ENCODE measurements at regions of chr1 and their contacts with region 1.

Region 1: GRCh38 chr1:201511941-201512539 is 5.1 kb upstream of the CSRP1 start:
- DNase-seq: no peak
- H3K4me3 Mint-ChIP-seq: no peak overlapping the region
- H3K27ac Mint-ChIP-seq: no peak overlapping the region
- H3K4me1 Mint-ChIP-seq: peaks cover 42% of the 10 kb centered on the region
- H3K27me3 Mint-ChIP-seq: no peaks in the 10 kb centered on the region

Region 2: GRCh38 chr1:201436393-201436792 is 75.6 kb before region 1 on chr1:
- CTCF ChIA-PET with region 1: interaction called, 35 read pairs
- POLR2A ChIA-PET with region 1: no interaction called
- DNase-seq: no peak
- H3K4me3 Mint-ChIP-seq: no peak overlapping the region
- H3K27ac Mint-ChIP-seq: no peak overlapping the region
- H3K4me1 Mint-ChIP-seq: peaks cover 4% of the 10 kb centered on the region
- H3K27me3 Mint-ChIP-seq: peaks cover 34% of the 10 kb centered on the region

Region 3: DNA sequence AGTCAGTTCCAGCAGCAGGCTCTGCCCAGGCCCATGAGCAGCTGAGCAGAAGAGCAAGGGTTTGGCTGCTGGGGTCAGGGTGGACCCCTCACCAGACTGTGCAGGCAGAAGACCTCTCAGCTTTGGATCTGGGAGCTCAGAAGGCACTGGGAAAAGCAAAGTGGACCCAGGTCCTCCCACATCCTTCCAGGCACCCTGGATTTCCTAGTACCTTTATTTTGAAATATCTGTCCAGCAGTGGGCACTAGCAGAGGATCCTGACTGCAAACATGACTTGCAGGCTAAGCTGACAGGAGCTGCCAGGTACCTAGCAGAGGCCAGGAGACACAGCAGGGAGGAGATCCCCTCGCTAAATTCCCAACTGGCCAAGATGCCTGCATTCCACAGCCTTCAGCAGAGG is 56.4 kb before region 1 on chr1:
- CTCF ChIA-PET with region 1: interaction called, 140 read pairs
- POLR2A ChIA-PET with region 1: interaction called, 3 read pairs
- DNase-seq: no peak
- H3K4me3 Mint-ChIP-seq: no peak overlapping the region
- H3K27ac Mint-ChIP-seq: no peak overlapping the region
- H3K4me1 Mint-ChIP-seq: peaks cover 34% of the 10 kb centered on the region
- H3K27me3 Mint-ChIP-seq: peaks cover 30% of the 10 kb centered on the region

Region 4: GRCh38 chr1:201481761-201482493 is 30.1 kb before region 1 on chr1:
- CTCF ChIA-PET with region 1: interaction called, 350 read pairs
- POLR2A ChIA-PET with region 1: interaction called, 48 read pairs
- DNase-seq: peak; percentile 86
- H3K4me3 Mint-ChIP-seq: peak overlapping the region; percentile 68
- H3K27ac Mint-ChIP-seq: peak overlapping the region; percentile 34
- H3K4me1 Mint-ChIP-seq: peaks cover 35% of the 10 kb centered on the region
- H3K27me3 Mint-ChIP-seq: peaks cover 12% of the 10 kb centered on the region

Region 5: GRCh38 chr1:201525197-201525778 is 13.2 kb after region 1 on chr1:
- CTCF ChIA-PET with region 1: interaction called, 42 read pairs
- POLR2A ChIA-PET with region 1: no interaction called
- DNase-seq: no peak
- H3K4me3 Mint-ChIP-seq: no peak overlapping the region
- H3K27ac Mint-ChIP-seq: no peak overlapping the region
- H3K4me1 Mint-ChIP-seq: peaks cover 5% of the 10 kb centered on the region
- H3K27me3 Mint-ChIP-seq: no peaks in the 10 kb centered on the region

Region 6: DNA sequence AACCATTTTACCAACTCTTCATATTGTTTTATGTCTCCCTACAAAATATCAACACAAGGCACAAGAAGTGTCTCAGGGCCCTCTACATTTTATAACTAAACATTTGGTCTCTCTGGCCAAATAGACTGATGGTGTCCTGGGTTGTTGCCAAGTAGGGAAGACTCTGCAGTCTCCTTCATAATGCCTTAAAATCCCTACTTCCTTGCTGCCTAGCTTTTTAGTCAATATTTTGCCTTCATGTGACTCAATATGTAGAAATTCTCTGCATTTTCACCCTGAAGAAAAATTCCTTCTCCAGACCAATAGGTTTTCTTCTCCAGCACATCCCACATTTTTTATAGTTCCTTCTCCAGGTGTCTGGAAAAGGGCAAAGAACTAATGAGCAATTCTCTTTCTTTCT is 244.4 kb after region 1 on chr1:
- CTCF ChIA-PET with region 1: no interaction called
- POLR2A ChIA-PET with region 1: no interaction called
- DNase-seq: no peak
- H3K4me3 Mint-ChIP-seq: no peak overlapping the region
- H3K27ac Mint-ChIP-seq: no peak overlapping the region
- H3K4me1 Mint-ChIP-seq: peaks cover 7% of the 10 kb centered on the region
- H3K27me3 Mint-ChIP-seq: peaks cover 26% of the 10 kb centered on the region